Sigmoid colon (tissue), 7 donors: ENCODE measurements at regions of chr6 and their contacts with region 1.

Region 1: GRCh38 chr6:169212897-169213813 is 40.5 kb downstream of the THBS2 start:
- DNase-seq: peak; percentile 95
- H3K4me3 ChIP-seq: peak overlapping the region in 3 of 4 donors; percentile 22 to 38 (median 33)
- H3K27ac ChIP-seq: peak overlapping the region; percentile 86 to 97 (median 90)
- H3K4me1 ChIP-seq: peaks cover 0 to 41% (median 37%) of the 10 kb centered on the region in 4 donors
- H3K27me3 ChIP-seq: no peaks in the 10 kb centered on the region
- CTCF ChIP-seq: peak in 1 of 4 experiments; percentile 26
- EP300 ChIP-seq: no peak
- POLR2A ChIP-seq: peak in 1 of 2 donors; percentile 11

Region 2: GRCh38 chr6:168636147-168637004 is 576.8 kb before region 1 on chr6:
- intact Hi-C with region 1: loop called (anchors 10 kb)
- DNase-seq: no peak
- H3K4me3 ChIP-seq: no peak overlapping the region
- H3K27ac ChIP-seq: no peak overlapping the region
- H3K4me1 ChIP-seq: peaks cover 0 to 48% (median 38%) of the 10 kb centered on the region in 4 donors
- H3K27me3 ChIP-seq: no peaks in the 10 kb centered on the region
- CTCF ChIP-seq: no peak
- EP300 ChIP-seq: no peak
- POLR2A ChIP-seq: no peak

Region 3: GRCh38 chr6:168956884-168957730 is 256.0 kb before region 1 on chr6:
- intact Hi-C with region 1: loop called (anchors 10 kb)
- DNase-seq: peak; percentile 90
- H3K4me3 ChIP-seq: no peak overlapping the region
- H3K27ac ChIP-seq: peak overlapping the region in 3 of 4 donors; percentile 17 to 40 (median 39)
- H3K4me1 ChIP-seq: peaks cover 0 to 32% (median 14%) of the 10 kb centered on the region in 4 donors
- H3K27me3 ChIP-seq: no peaks in the 10 kb centered on the region
- CTCF ChIP-seq: peak; percentile 72 to 83 (median 75)
- EP300 ChIP-seq: no peak
- POLR2A ChIP-seq: no peak

Region 4: GRCh38 chr6:169046483-169047192 is 166.5 kb before region 1 on chr6:
- intact Hi-C with region 1: no loop called
- DNase-seq: no peak
- H3K4me3 ChIP-seq: no peak overlapping the region
- H3K27ac ChIP-seq: no peak overlapping the region
- H3K4me1 ChIP-seq: peaks cover 0 to 10% (median 4%) of the 10 kb centered on the region in 4 donors
- H3K27me3 ChIP-seq: no peaks in the 10 kb centered on the region
- CTCF ChIP-seq: no peak
- EP300 ChIP-seq: no peak
- POLR2A ChIP-seq: no peak

Region 5: DNA sequence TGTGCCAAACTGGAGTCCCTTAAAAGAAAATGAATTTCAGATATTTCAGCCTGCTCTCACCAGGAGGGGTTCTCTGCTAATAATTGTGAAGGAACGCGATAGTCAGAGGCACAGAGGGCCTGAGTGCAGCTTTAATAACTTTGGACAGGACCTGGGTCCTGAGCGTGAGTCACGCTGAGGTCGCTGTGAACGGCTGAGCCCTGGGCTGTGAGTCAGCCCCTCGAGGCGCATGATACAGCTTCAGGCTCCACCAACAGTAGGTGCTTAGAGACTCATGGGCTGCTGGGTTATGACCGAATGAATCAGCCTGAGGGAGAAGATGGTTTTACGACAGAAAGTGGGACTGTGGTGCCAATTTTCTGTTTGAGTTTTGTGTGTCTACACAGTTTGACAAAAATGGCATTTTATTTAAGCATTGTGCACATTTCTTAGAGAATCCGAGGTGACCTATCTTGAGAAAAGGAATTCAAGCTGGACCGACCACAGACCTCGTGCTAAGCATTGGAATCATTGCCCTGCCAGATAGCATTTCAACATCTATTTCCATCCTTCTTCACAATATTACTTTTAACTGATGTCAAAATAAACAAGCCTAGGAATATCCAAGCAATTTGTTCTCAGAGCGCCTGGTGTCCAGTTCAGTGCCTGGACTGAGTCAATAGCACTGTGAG is 142.5 kb before region 1 on chr6:
- intact Hi-C with region 1: loop called (anchors 2 kb)
- DNase-seq: peak; percentile 97
- H3K4me3 ChIP-seq: no peak overlapping the region
- H3K27ac ChIP-seq: peak overlapping the region; percentile 62 to 89 (median 79)
- H3K4me1 ChIP-seq: peaks cover 0 to 59% (median 53%) of the 10 kb centered on the region in 4 donors
- H3K27me3 ChIP-seq: no peaks in the 10 kb centered on the region
- CTCF ChIP-seq: peak in 1 of 4 experiments; percentile 4
- EP300 ChIP-seq: peak in 3 of 4 donors; percentile 7 to 87 (median 43)
- POLR2A ChIP-seq: no peak

Region 6: DNA sequence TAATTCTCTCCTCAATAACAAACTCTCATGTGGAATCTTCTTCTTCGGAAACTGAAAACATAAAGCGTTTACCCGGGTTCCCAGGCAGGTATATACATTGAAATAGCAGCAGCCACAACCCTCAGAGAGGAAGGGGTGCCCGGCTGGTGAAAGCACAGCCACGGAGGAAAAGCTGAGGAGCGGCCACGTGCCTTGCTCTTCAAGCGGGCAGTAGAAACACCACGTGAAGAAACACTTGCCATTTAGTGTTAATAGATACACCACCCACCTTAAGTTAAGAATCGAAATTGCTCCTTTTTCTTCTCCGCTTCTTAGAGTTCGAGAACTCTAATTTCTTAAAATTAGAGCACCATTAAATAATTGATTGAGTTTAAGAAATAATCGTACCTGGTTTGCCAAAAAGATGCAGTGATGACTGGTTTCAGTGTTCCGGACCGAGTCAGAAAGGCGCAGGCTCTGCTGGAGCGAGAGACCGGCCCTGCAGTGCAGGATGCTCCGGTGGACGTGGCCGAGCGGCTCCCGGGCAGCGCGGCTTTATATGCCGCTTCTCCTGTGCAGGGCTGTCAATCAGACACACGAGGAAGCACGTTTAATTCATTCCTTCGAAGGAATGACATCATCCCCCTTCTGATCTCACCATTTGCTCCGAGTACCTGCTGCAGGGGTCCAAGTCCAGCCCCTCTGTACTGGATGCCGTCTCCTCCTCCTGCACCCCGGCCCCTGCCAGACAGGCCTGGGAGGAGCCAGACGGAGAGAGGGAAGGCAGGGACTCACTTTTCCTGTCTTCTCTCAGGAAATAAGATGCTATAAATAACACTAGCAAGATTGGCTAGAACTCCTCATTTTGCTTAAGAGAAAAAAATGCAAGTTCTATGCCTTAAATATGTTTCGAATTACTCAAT is 40.4 kb after region 1 on chr6 and contains the start of gene THBS2:
- intact Hi-C with region 1: loop called (anchors 2 kb)
- DNase-seq: peak; percentile 92
- H3K4me3 ChIP-seq: peak within 1 kb of the TSS; percentile 24 to 46 (median 40)
- H3K27ac ChIP-seq: peak within 1 kb of the TSS; percentile 34 to 71 (median 62)
- H3K4me1 ChIP-seq: peaks cover 0 to 40% (median 15%) of the 10 kb centered on the region in 4 donors
- H3K27me3 ChIP-seq: no peaks in the 10 kb centered on the region
- CTCF ChIP-seq: no peak
- EP300 ChIP-seq: no peak
- POLR2A ChIP-seq: peak; percentile 42 to 47
- total RNA-seq, gene THBS2: 37.6 to 59.0 (median 42.7) TPM

Region 7: DNA sequence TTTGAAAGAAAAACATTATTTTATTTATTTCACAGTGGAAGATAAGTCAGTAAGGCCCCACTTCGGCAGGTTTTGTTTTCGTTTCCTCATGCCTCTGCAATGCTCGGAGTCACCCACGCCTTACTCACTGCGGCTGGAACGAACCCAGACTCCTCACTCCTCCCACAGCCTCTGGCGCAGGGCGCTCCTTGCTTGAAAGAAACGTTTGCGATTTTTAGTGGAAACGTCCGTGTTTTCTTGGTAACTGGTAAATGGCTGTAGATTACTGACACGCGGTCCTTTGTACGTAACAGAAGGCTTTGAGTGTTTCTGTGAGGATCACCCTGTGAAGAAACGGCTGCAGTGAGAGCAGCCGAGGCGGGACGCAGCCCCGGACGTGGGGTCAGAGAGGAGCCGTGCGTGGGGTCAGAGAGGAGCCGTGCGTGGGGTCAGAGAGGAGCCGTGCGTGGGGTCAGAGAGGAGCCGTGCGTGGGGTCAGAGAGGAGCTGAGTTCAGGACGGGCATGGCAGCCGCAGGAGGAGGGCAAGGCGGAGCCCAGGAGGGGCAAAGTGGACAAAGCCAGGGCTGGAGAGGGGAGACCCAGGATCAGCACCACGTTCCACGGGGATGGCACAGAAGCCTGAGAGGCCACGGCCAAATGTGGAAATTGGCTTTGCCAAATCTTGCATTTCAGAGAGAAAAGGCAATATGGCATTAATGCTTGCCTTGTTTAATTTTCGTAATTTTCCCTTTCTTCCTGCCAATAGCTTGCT is 239.1 kb after region 1 on chr6:
- intact Hi-C with region 1: loop called (anchors 5 kb)
- DNase-seq: peak; percentile 94
- H3K4me3 ChIP-seq: peak overlapping the region; percentile 13 to 46 (median 42)
- H3K27ac ChIP-seq: peak overlapping the region; percentile 69 to 83 (median 78)
- H3K4me1 ChIP-seq: peaks cover 0 to 12% (median 6%) of the 10 kb centered on the region in 4 donors
- H3K27me3 ChIP-seq: no peaks in the 10 kb centered on the region
- CTCF ChIP-seq: no peak
- EP300 ChIP-seq: no peak
- POLR2A ChIP-seq: peak in 1 of 2 donors; percentile 10

Region 8: GRCh38 chr6:169529931-169530751 is 317.0 kb after region 1 on chr6:
- intact Hi-C with region 1: loop called (anchors 10 kb)
- DNase-seq: peak; percentile 89
- H3K4me3 ChIP-seq: no peak overlapping the region
- H3K27ac ChIP-seq: peak overlapping the region; percentile 58 to 82 (median 78)
- H3K4me1 ChIP-seq: peaks cover 0 to 39% (median 28%) of the 10 kb centered on the region in 4 donors
- H3K27me3 ChIP-seq: no peaks in the 10 kb centered on the region
- CTCF ChIP-seq: no peak
- EP300 ChIP-seq: peak in 3 of 4 donors; percentile 78 to 92 (median 91)
- POLR2A ChIP-seq: no peak